Head of caudate nucleus (tissue), 42 donors: ENCODE measurements at regions of chr19 and their contacts with region 1.

Region 1: DNA sequence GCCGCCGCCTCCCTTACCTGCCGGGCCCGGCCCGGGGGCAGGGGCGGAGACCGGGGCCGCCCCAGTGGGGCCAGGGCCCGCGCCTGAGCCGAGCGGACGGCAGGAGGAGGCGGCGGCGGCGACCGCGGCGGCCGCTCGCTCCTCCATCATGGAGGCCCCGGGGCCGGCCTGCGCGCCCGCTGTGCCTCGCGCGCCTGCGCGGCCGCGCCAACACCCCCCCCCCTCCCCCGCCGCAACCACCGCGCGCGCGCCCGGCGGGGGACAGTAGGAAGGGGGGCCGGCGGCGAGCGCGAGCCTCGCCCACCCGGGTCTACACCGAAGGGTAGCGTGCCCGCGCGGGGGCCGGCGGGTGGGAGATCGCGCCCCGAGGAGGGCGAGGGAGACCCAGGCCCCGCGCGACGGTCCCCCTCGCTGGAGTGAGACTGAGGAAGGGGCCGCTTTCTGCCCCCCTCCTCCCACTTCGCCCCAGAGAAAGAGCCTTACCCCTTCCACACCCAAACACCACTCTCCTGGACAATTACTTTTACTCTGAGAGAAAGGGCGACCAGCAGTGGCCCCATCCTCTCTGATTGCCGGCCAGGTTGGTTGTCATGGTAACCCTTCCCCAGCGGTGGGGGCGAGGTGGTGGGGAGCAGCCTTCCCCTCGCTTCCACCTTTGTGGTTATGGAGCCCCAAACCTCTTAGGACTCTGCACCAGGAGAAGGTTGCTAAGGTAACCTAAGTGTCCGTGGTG is at the start of gene STRN4:
- DNase-seq: peak in 33 of 42 donors; percentile 31 to 81 (median 65)

Region 2: DNA sequence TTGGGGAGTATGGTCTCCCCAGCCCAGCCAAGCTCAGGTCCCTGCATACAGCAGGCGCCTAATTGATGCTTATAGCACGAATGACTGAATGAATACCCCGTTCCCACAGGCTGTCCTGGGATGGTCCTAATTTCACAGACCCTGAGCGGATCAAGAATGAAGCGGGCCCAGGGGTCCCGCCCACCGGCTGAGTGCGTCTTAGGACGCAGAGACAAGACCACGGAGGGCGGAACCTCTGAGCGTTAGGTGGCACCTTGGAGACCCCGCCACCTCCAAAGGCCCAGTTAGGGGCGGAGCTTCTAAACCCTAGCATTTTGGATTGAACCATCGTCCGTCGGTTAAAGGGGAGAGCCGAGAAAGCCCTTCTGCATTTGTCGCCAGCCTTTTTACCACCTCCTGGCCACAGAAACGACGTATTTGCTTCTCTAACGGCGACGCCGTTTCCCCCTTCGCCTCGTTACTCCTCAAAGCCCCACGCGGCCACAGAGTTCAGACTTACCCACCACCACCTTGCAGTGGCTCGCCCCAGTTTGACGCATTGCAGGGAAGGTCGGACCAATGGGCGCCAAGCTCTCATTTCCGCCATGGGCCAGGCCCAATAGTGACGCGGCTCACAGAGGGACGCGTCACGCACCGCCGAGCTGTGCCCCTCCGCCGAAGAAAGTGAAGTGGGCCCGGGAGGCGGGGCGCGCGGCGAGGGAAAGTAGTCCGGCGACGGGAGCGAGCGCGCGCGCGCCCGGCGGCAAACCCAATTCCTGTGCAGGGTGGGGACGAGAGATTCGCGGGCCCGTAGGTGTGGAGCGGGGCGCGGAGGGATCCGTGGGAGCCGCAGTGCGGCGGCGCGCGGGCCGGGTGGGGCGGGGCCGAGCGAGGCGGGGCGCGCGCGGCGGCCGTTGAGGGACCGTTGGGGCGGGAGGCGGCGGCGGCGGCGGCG is 145.8 kb before region 1 on chr19:
- intact Hi-C with region 1: loop called (anchors 5 kb)
- DNase-seq: peak; percentile 90 to 99 (median 97)

Region 3: GRCh38 chr19:46821498-46822409 is 75.3 kb after region 1 on chr19:
- intact Hi-C with region 1: no loop called
- DNase-seq: peak in 1 of 42 donors; percentile 15